ENCODE measurements at regions of chr18 and their contacts with region 1.

Region 1: DNA sequence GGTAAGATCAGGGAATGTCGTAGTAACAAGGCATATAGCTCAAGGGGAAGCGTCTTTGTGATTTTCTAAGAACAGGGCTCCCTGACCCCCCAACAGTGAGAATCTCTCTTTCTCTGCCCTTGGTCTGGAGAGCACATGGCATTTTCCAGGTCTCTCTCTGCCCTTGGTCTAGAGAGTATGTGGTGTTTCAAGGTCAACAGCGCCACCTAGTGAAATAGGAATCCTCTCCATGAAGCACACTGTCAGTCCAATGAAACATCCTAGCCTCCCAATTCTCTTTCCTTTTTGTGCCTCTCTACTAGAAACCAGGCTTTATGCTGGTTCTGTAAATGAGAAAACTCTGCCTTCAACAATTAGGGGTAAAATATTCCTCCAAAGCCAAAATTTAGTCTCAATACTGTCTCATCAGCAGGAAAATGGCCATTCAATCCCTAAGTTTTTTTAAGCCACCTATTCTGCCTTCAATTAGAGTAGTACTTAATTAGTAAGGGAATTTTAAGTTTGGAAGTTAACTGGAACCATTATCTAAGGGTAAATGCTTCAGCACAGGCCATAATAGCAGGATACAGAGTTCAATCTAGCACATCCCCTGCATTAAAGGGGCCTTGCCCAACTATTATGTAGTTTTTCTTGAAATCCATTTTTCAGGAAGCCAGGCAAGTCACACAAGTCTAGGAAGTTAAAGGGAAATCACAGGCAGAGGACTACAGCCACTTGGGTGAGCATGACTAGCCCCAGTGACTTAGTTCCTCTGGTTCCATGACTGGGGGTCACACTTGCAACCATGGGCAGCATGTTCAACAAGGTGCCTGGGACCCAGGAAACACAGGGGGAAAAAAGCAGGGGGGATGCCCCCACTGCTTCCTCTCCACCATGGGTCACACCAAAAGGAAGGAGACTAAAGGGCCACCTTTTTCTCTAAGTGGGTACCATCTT is 12.4 kb downstream of the DYM start:
- DNase-seq: peak; percentile 63
- H3K4me3 ChIP-seq: no peak overlapping the region
- H3K27ac ChIP-seq: no peak overlapping the region
- H3K4me1 ChIP-seq: no peaks in the 10 kb centered on the region
- H3K27me3 ChIP-seq: no peaks in the 10 kb centered on the region
- CTCF ChIP-seq: peak; percentile 71 to 72

Region 2: DNA sequence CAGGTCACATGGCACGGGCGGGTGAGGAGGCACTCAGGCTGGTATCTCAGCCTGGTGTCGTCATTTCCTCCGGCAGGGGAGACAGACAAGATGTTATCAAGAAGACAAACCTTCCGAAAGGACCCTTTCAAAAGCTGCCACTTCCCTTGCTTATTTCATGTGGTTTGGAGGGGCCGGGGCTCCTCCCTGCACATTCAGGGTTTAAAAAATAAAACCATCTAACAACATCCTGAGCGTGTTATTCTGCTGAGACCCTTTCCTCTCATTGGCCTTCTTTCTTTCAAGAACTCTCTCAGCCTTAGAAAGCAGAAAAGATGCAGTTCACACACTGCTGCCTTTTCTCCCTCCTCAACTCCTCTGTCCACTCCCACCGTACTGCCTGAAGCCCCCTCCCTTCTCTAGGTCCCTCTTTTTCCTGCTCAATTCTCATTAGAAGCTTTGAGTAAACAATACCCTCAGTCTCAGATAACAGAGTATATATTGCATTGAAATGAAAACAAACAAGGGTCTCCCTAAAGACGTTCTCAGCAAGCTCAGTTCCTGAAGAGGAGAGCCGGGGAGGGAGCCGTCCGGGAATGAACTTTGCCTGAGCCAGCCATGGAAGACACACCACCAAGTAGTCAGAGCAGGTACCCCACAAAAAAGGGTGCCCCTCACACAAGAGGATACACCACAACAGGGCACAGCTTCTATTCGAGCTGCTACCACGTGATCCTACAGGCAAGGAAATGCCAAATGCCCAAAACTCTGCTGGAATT is 507.0 kb before region 1 on chr18:
- CTCF ChIA-PET with region 1: no interaction called
- dilution Hi-C with region 1: no loop called
- in situ Hi-C with region 1: no loop called
- intact Hi-C with region 1: loop called (anchors 5 kb)
- DNase-seq: no peak
- H3K4me3 ChIP-seq: no peak overlapping the region
- H3K27ac ChIP-seq: no peak overlapping the region
- H3K4me1 ChIP-seq: peaks cover 77% of the 10 kb centered on the region
- H3K27me3 ChIP-seq: no peaks in the 10 kb centered on the region
- CTCF ChIP-seq: no peak

Region 3: GRCh38 chr18:49055754-49056172 is 392.3 kb before region 1 on chr18:
- CTCF ChIA-PET with region 1: no interaction called
- dilution Hi-C with region 1: loop called (anchors 25 kb)
- in situ Hi-C with region 1: no loop called
- intact Hi-C with region 1: no loop called
- DNase-seq: peak; percentile 17
- H3K4me3 ChIP-seq: no peak overlapping the region
- H3K27ac ChIP-seq: no peak overlapping the region
- H3K4me1 ChIP-seq: no peaks in the 10 kb centered on the region
- H3K27me3 ChIP-seq: no peaks in the 10 kb centered on the region
- CTCF ChIP-seq: no peak

Region 4: GRCh38 chr18:49250816-49251388 is 197.2 kb before region 1 on chr18:
- CTCF ChIA-PET with region 1: no interaction called
- dilution Hi-C with region 1: no loop called
- in situ Hi-C with region 1: no loop called
- intact Hi-C with region 1: loop called (anchors 2 kb)
- DNase-seq: no peak
- H3K4me3 ChIP-seq: no peak overlapping the region
- H3K27ac ChIP-seq: no peak overlapping the region
- H3K4me1 ChIP-seq: peaks cover 16% of the 10 kb centered on the region
- H3K27me3 ChIP-seq: no peaks in the 10 kb centered on the region
- CTCF ChIP-seq: peak; percentile 34 to 37

Region 5: DNA sequence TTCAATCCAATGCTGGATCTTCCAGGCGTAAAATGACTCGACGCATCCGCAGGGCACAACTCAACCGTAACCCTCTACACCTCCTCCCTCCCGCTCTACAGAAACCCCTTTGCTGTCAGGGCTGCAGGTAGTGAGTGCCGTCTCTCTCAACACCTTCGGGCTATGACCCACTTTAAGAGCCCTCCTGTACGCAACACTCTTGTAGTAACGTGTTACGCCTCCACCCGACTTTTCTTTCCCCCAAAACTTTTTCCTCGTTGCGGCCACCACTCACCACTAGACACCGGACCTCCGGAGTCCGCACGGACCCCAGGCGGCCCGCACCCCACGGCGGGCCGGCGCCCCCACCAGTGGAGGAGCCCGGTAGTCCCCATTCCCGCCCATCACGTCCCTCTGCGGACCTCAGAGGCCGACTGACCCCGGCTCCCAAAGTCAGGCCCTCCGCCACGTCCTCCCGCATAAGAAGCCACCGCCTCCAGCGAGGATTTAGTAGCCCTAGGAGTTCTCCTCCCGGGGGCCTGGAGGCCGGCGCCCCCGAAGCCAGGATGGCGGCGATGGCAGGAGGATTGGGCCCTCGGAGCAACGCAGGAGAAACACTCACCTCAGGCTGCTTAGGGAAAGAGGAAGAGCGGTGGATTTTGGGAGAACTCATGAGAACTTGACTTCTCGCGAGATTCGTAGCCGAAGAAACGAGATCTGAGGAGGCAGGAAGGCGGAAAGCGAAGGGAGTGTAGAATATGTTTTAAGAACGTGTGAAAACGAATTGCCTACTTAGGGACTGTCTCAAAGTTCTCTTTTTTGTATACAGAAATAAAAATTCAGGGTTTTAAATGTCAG is 44.0 kb after region 1 on chr18:
- CTCF ChIA-PET with region 1: no interaction called
- dilution Hi-C with region 1: no loop called
- in situ Hi-C with region 1: no loop called
- intact Hi-C with region 1: no loop called
- DNase-seq: peak; percentile 98
- H3K4me3 ChIP-seq: peak within 1 kb of the TSS; percentile 56 to 82 (median 65)
- H3K27ac ChIP-seq: peak within 1 kb of the TSS; percentile 91
- H3K4me1 ChIP-seq: peaks cover 32% of the 10 kb centered on the region
- H3K27me3 ChIP-seq: no peaks in the 10 kb centered on the region
- CTCF ChIP-seq: no peak